Heart left ventricle (tissue), 16 donors: ENCODE measurements at regions of chr9 and their contacts with region 1.

Region 1: GRCh38 chr9:122125158-122125508 is 32.0 kb upstream of the TTLL11 start:
- DNase-seq: peak; percentile 79 to 88 (median 80)
- ATAC-seq: peak; percentile 77 to 87 (median 82)
- H3K4me3 ChIP-seq: no peak overlapping the region
- H3K27ac ChIP-seq: no peak overlapping the region
- H3K4me1 ChIP-seq: peaks cover 6 to 40% (median 22%) of the 10 kb centered on the region in 12 donors
- H3K27me3 ChIP-seq: peaks cover 0 to 26% (median 0%) of the 10 kb centered on the region in 9 donors
- CTCF ChIP-seq: peak in 11 of 12 donors; percentile 93 to 99 (median 94)
- POLR2A ChIP-seq: no peak

Region 2: DNA sequence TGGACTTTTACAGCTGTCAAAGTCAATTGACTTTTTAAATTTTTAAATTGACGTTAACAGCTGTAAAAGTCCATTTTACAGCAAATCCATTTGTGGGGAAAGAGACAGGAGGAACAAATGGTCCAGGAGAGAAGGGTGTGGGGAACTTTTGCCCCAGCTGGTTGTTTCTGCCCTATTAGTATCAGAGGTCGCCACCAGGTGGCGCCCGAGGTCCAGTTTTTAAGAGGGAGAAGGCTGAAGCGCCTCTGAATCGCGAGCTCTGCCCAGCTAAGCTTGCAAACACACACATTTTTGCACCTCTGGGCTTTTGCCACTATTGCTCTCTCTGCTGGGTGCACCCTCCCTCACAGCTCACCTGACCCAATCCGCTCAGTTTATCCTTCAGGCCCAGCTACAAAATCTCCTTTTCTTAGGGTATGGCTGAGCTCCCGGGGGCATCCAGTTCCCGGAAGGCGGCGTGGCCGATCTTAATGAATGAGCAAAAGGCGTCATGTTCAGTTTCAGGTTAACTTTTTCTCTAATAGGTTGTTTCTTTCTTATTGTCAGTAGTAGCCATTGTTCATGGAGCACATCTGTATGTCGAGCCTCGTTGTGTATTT is 25.8 kb before region 1 on chr9:
- intact Hi-C with region 1: loop called in 8 of 10 experiments (anchors 1 to 2 kb)
- DNase-seq: peak; percentile 75 to 89 (median 79)
- ATAC-seq: peak in 3 of 4 donors; percentile 78 to 89 (median 88)
- H3K4me3 ChIP-seq: peak overlapping the region in 1 of 12 donors; percentile 27
- H3K27ac ChIP-seq: no peak overlapping the region
- H3K4me1 ChIP-seq: peaks cover 0 to 8% (median 0%) of the 10 kb centered on the region in 12 donors
- H3K27me3 ChIP-seq: no peaks in the 10 kb centered on the region
- CTCF ChIP-seq: peak; percentile 79 to 94 (median 88)
- POLR2A ChIP-seq: no peak

Region 3: GRCh38 chr9:122228568-122229484 is 103.7 kb after region 1 on chr9 and contains the start of gene LHX6:
- intact Hi-C with region 1: loop called in 2 of 10 experiments (anchors 5 to 10 kb)
- DNase-seq: peak in 1 of 5 donors; percentile 49
- ATAC-seq: peak in 3 of 4 donors; percentile 24 to 70 (median 35)
- H3K4me3 ChIP-seq: peak within 1 kb of the TSS; percentile 29 to 61 (median 52)
- H3K27ac ChIP-seq: peak within 1 kb of the TSS in 8 of 12 donors; percentile 10 to 57 (median 39)
- H3K4me1 ChIP-seq: peaks cover 0 to 33% (median 18%) of the 10 kb centered on the region in 12 donors
- H3K27me3 ChIP-seq: peaks cover 28 to 87% (median 68%) of the 10 kb centered on the region in 9 donors
- CTCF ChIP-seq: no peak
- POLR2A ChIP-seq: no peak
- total RNA-seq, gene LHX6: 2.9 to 11.2 (median 6.5) TPM

Region 4: GRCh38 chr9:122264360-122265148 is 139.4 kb after region 1 on chr9 and contains the starts of genes MRRF and RBM18:
- intact Hi-C with region 1: loop called in 3 of 10 experiments (anchors 5 to 10 kb)
- DNase-seq: peak; percentile 92 to 95 (median 93)
- ATAC-seq: peak; percentile 76 to 93 (median 90)
- H3K4me3 ChIP-seq: peak within 1 kb of the TSS; percentile 52 to 77 (median 72)
- H3K27ac ChIP-seq: peak within 1 kb of the TSS; percentile 78 to 97 (median 94)
- H3K4me1 ChIP-seq: peaks cover 19 to 61% (median 44%) of the 10 kb centered on the region in 12 donors
- H3K27me3 ChIP-seq: no peaks in the 10 kb centered on the region
- CTCF ChIP-seq: peak in 1 of 12 donors; percentile 7
- POLR2A ChIP-seq: peak in 1 of 2 donors; percentile 74
- total RNA-seq, gene MRRF: 29.2 to 44.5 (median 36.0) TPM
- total RNA-seq, gene RBM18: 24.7 to 49.0 (median 38.4) TPM

Region 5: GRCh38 chr9:122453677-122454135 is 328.6 kb after region 1 on chr9:
- intact Hi-C with region 1: loop called in 7 of 10 experiments (anchors 1 to 10 kb)
- DNase-seq: no peak
- ATAC-seq: no peak
- H3K4me3 ChIP-seq: no peak overlapping the region
- H3K27ac ChIP-seq: no peak overlapping the region
- H3K4me1 ChIP-seq: no peaks in the 10 kb centered on the region
- H3K27me3 ChIP-seq: peaks cover 0 to 10% (median 0%) of the 10 kb centered on the region in 9 donors
- CTCF ChIP-seq: no peak
- POLR2A ChIP-seq: no peak